AG04449 (cell line): ENCODE measurements at regions of chr1 and their contacts with region 1.

Region 1: DNA sequence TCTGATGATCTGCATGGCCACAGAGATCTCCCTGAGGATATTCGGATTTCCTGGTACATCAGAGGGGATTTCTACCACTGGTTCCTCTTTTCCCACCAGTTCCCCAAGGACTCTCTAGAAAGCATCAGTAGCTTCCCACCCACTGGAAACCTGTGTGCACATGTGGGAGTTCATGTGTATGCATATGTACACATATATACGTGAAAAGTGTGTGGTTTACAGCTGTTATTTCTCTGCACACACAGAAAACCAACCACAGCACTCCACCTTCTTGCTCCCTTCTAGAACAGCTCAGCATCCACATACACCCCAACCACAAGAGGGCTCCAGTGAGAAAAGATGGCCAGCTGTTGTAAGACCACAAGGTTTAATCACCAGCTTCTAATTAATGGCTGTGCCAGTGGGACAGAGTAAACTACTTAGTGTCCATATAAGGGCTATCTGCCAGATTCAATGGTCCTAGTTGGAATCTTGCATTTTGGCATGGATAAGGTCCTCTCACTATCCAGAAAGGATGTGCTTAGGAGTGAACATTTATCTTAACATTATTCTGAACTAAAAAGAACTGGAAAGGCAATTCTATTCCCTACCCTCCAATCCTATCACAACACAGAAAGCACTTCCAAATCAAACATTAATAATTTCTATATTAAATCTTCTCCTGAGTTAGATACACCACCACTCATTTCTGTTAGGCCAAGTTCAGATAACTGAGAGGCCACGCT is 24.1 kb downstream of the GPR3 start:
- DNase-seq: no peak
- H3K4me3 ChIP-seq: no peak overlapping the region
- CTCF ChIP-seq: peak; percentile 61

Region 2: GRCh38 chr1:27365372-27366112 is 51.0 kb before region 1 on chr1:
- CTCF ChIA-PET with region 1: no interaction called
- POLR2A ChIA-PET with region 1: no interaction called
- DNase-seq: peak; percentile 42
- H3K4me3 ChIP-seq: peak overlapping the region; percentile 63
- CTCF ChIP-seq: no peak

Region 3: GRCh38 chr1:27402349-27402754 is 14.2 kb before region 1 on chr1:
- CTCF ChIA-PET with region 1: interaction called, 31 read pairs
- POLR2A ChIA-PET with region 1: no interaction called
- DNase-seq: no peak
- H3K4me3 ChIP-seq: no peak overlapping the region
- CTCF ChIP-seq: peak; percentile 81

Region 4: DNA sequence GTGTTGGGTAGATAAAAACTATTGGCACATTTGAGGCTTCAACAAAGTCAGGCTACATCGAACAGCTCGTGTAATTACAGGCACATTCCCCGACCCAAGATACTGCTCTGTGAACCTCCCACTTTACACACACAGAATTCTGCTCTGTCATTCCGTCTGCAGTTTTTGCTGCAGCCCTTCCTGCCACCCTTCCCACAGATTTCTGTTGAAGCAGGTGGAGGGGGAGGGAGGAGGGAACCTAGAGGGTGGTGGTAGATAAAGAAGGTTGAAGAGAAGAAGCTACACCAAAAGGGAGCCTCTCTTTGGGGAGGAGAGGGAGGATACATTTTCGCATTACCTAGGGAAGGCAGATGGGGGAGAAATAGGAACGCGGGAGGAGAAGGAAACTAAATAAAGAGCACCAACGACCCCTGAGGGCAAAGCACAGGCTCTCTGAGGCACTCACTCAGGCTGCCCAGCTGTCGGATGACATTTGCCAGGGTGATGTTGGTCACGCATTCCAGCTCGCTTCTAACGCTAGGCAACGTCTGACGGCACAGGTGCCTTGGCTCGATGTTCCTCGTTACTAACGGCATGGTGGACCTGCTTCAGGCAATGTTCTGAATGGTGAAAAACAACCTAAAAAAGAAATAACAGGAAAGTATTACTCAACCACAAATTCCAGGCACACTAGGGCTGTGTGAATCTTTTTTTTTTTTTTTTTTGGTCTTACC is 11.9 kb after region 1 on chr1:
- CTCF ChIA-PET with region 1: interaction called, 12 read pairs
- POLR2A ChIA-PET with region 1: no interaction called
- DNase-seq: no peak
- H3K4me3 ChIP-seq: no peak overlapping the region
- CTCF ChIP-seq: no peak

Region 5: GRCh38 chr1:27433706-27434105 is 17.2 kb after region 1 on chr1:
- CTCF ChIA-PET with region 1: interaction called, 12 read pairs
- POLR2A ChIA-PET with region 1: no interaction called
- DNase-seq: no peak
- H3K4me3 ChIP-seq: no peak overlapping the region
- CTCF ChIP-seq: no peak